Activated CD4-positive, alpha-beta memory T cell treated with anti-CD3 and anti-CD28 coated beads for 36 hours (primary cell): ENCODE measurements at regions of chr14 and their contacts with region 1.

Region 1: GRCh38 chr14:106501898-106502297 is 975.5 kb downstream of the TMEM121 start:
- DNase-seq: no peak
- H3K4me3 Mint-ChIP-seq: no peak overlapping the region
- H3K27ac Mint-ChIP-seq: no peak overlapping the region
- H3K4me1 Mint-ChIP-seq: peaks cover 14% of the 10 kb centered on the region
- H3K27me3 Mint-ChIP-seq: no peaks in the 10 kb centered on the region

Region 2: GRCh38 chr14:106491851-106492250 is 10.0 kb before region 1 on chr14:
- CTCF ChIA-PET with region 1: interaction called, 48 read pairs
- POLR2A ChIA-PET with region 1: interaction called, 13 read pairs
- intact Hi-C with region 1: loop called (anchors 1 kb)
- DNase-seq: peak; percentile 50
- H3K4me3 Mint-ChIP-seq: no peak overlapping the region
- H3K27ac Mint-ChIP-seq: no peak overlapping the region
- H3K4me1 Mint-ChIP-seq: peaks cover 21% of the 10 kb centered on the region
- H3K27me3 Mint-ChIP-seq: no peaks in the 10 kb centered on the region

Region 3: DNA sequence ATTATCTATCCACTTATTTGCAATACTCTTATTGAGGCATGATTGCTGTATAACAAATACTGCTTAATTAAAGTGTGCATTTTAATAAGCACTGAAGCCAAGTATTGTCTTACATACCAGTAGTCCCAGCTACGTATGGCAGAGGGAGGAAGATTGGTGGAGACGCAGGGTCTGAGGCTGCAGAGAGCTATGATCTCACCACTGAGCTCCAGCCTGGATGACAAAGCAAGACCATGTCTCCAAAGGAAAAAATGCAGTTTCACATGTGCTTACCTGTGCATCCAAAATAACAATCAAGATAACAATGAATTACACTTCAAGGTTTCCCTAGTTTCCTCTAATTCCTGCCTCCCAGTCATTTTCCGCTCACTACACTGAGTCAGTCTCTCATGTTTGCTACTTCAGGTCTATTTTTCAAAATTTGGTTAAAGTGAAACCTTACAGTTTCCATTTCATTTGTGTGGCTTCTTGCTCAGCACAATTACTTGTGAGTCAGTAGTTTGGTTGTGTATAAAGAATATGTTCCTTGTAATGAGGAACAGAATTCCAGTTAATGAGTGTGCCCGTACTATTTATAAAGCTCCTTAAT is 274.6 kb after region 1 on chr14:
- CTCF ChIA-PET with region 1: no interaction called
- POLR2A ChIA-PET with region 1: no interaction called
- intact Hi-C with region 1: no loop called
- DNase-seq: no peak
- H3K4me3 Mint-ChIP-seq: no peak overlapping the region
- H3K27ac Mint-ChIP-seq: no peak overlapping the region
- H3K4me1 Mint-ChIP-seq: peaks cover 24% of the 10 kb centered on the region
- H3K27me3 Mint-ChIP-seq: peaks cover 2% of the 10 kb centered on the region